ENCODE measurements at regions of chr14 and their contacts with region 1.

Region 1: GRCh38 chr14:57066887-57067513 is 201.7 kb downstream of the EXOC5 start:
- DNase-seq: peak; percentile 16
- ATAC-seq: peak; percentile 95
- H3K4me3 ChIP-seq: no peak overlapping the region
- H3K27ac ChIP-seq: no peak overlapping the region
- H3K4me1 ChIP-seq: no peaks in the 10 kb centered on the region
- H3K27me3 ChIP-seq: peaks cover 0 to 5% of the 10 kb centered on the region in 2 experiments; a peak in 2 of 5 replicates
- CTCF ChIP-seq: peak; percentile 85
- EP300 ChIP-seq: no peak
- POLR2A ChIP-seq: no peak
- RAD21 ChIP-seq: peak; percentile 47

Region 2: DNA sequence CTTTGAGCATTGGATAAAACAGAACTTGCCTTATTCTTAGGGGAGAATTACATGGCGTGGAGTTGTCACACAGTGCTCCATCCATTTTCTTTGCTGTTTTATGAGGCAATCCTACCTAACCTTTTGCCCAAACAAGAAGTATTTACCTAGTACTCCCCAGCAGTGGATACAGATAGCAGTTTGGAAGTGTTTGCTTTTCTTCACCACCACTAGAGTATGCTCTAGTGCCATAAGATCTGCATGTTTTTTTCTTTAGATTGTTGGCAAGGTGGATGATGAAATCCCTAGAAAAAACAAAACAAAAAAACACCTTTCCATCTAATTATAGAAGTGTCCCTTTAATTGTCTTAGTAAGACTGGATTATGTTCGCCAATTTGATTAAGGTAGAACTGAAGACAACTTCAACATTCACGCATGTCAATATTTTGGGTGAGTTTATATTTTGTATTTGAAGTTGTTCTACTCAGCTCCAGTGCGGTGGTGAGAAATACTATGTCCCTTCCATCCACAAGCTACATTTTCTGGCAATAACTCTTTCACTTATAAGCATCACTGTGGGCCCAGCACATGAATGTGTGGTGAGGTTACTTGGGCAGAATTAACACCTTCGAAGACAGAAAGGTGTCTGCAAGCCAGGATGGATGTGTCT is 511.0 kb before region 1 on chr14:
- CTCF ChIA-PET with region 1: interaction called, 7 read pairs
- POLR2A ChIA-PET with region 1: no interaction called
- in situ Hi-C with region 1: loop called (anchors 10 kb)
- intact Hi-C with region 1: loop called (anchors 1 kb)
- DNase-seq: peak; percentile 76
- ATAC-seq: peak; percentile 97
- H3K4me3 ChIP-seq: no peak overlapping the region
- H3K27ac ChIP-seq: no peak overlapping the region
- H3K4me1 ChIP-seq: peaks cover 19% of the 10 kb centered on the region
- H3K27me3 ChIP-seq: no peaks in the 10 kb centered on the region
- CTCF ChIP-seq: peak; percentile 83
- EP300 ChIP-seq: 0 out of 4 replicates have a peak, but pooled peaks of 1 of the 2 experiments have one; percentile 16
- POLR2A ChIP-seq: no peak
- RAD21 ChIP-seq: peak; percentile 70

Region 3: GRCh38 chr14:56686416-56686815 is 380.6 kb before region 1 on chr14:
- CTCF ChIA-PET with region 1: no interaction called
- POLR2A ChIA-PET with region 1: no interaction called
- in situ Hi-C with region 1: loop called (anchors 25 kb)
- intact Hi-C with region 1: no loop called
- DNase-seq: peak; percentile 6
- ATAC-seq: peak; percentile 87
- H3K4me3 ChIP-seq: no peak overlapping the region
- H3K27ac ChIP-seq: no peak overlapping the region
- H3K4me1 ChIP-seq: no peaks in the 10 kb centered on the region
- H3K27me3 ChIP-seq: no peaks in the 10 kb centered on the region
- CTCF ChIP-seq: peak; percentile 61
- EP300 ChIP-seq: no peak
- POLR2A ChIP-seq: no peak
- RAD21 ChIP-seq: no peak

Region 4: GRCh38 chr14:56816574-56817391 is 250.2 kb before region 1 on chr14:
- CTCF ChIA-PET with region 1: no interaction called
- POLR2A ChIA-PET with region 1: no interaction called
- in situ Hi-C with region 1: no loop called
- intact Hi-C with region 1: no loop called
- DNase-seq: no peak
- ATAC-seq: no peak
- H3K4me3 ChIP-seq: no peak overlapping the region
- H3K27ac ChIP-seq: no peak overlapping the region
- H3K4me1 ChIP-seq: no peaks in the 10 kb centered on the region
- H3K27me3 ChIP-seq: peaks cover 9 to 31% of the 10 kb centered on the region in 2 experiments
- CTCF ChIP-seq: no peak
- EP300 ChIP-seq: no peak
- POLR2A ChIP-seq: no peak
- RAD21 ChIP-seq: no peak

Region 5: GRCh38 chr14:57293866-57294837 is 227.2 kb after region 1 on chr14:
- CTCF ChIA-PET with region 1: interaction called, 3 read pairs
- POLR2A ChIA-PET with region 1: no interaction called
- in situ Hi-C with region 1: no loop called
- intact Hi-C with region 1: loop called (anchors 1 kb)
- DNase-seq: no peak
- ATAC-seq: no peak
- H3K4me3 ChIP-seq: no peak overlapping the region
- H3K27ac ChIP-seq: no peak overlapping the region
- H3K4me1 ChIP-seq: peaks cover 27% of the 10 kb centered on the region
- H3K27me3 ChIP-seq: no peaks in the 10 kb centered on the region
- CTCF ChIP-seq: no peak
- EP300 ChIP-seq: no peak
- POLR2A ChIP-seq: no peak
- RAD21 ChIP-seq: no peak

Measured in HepG2 (cell line).